Vagina (tissue), 2 donors: ENCODE measurements at regions of chr2 and their contacts with region 1.

Region 1: GRCh38 chr2:144516981-144517865 is 2.7 kb downstream of the ZEB2 start:
- DNase-seq: no peak
- H3K4me3 ChIP-seq: peak overlapping the region; percentile 70 to 84
- H3K27ac ChIP-seq: peak overlapping the region; percentile 99
- H3K4me1 ChIP-seq: peaks cover 7% of the 10 kb centered on the region
- H3K27me3 ChIP-seq: no peaks in the 10 kb centered on the region
- CTCF ChIP-seq: no peak
- POLR2A ChIP-seq: no peak

Region 2: GRCh38 chr2:143521396-143521795 is 995.8 kb before region 1 on chr2:
- intact Hi-C with region 1: loop called (anchors 1 kb)
- DNase-seq: no peak
- H3K4me3 ChIP-seq: no peak overlapping the region
- H3K27ac ChIP-seq: no peak overlapping the region
- H3K4me1 ChIP-seq: peaks cover 25% of the 10 kb centered on the region
- H3K27me3 ChIP-seq: no peaks in the 10 kb centered on the region
- CTCF ChIP-seq: no peak
- POLR2A ChIP-seq: no peak

Region 3: GRCh38 chr2:144320491-144320890 is 196.7 kb before region 1 on chr2:
- intact Hi-C with region 1: no loop called
- DNase-seq: no peak
- H3K4me3 ChIP-seq: no peak overlapping the region
- H3K27ac ChIP-seq: no peak overlapping the region
- H3K4me1 ChIP-seq: peaks cover 8% of the 10 kb centered on the region
- H3K27me3 ChIP-seq: no peaks in the 10 kb centered on the region
- CTCF ChIP-seq: no peak
- POLR2A ChIP-seq: no peak

Region 4: GRCh38 chr2:144332356-144333142 is 184.7 kb before region 1 on chr2:
- intact Hi-C with region 1: loop called (anchors 5 kb)
- DNase-seq: peak in 1 of 2 donors; percentile 90
- H3K4me3 ChIP-seq: peak overlapping the region; percentile 58 to 81
- H3K27ac ChIP-seq: peak overlapping the region; percentile 91
- H3K4me1 ChIP-seq: peaks cover 15% of the 10 kb centered on the region
- H3K27me3 ChIP-seq: no peaks in the 10 kb centered on the region
- CTCF ChIP-seq: no peak
- POLR2A ChIP-seq: no peak

Region 5: GRCh38 chr2:144572977-144573376 is 55.8 kb after region 1 on chr2:
- intact Hi-C with region 1: no loop called
- DNase-seq: no peak
- H3K4me3 ChIP-seq: no peak overlapping the region
- H3K27ac ChIP-seq: no peak overlapping the region
- H3K4me1 ChIP-seq: no peaks in the 10 kb centered on the region
- H3K27me3 ChIP-seq: no peaks in the 10 kb centered on the region
- CTCF ChIP-seq: no peak
- POLR2A ChIP-seq: no peak

Region 6: GRCh38 chr2:144937910-144938709 is 420.9 kb after region 1 on chr2:
- intact Hi-C with region 1: loop called (anchors 5 kb)
- DNase-seq: no peak
- H3K4me3 ChIP-seq: no peak overlapping the region
- H3K27ac ChIP-seq: peak overlapping the region; percentile 58
- H3K4me1 ChIP-seq: peaks cover 16% of the 10 kb centered on the region
- H3K27me3 ChIP-seq: no peaks in the 10 kb centered on the region
- CTCF ChIP-seq: no peak
- POLR2A ChIP-seq: no peak